ENCODE measurements at regions of chr15 and their contacts with region 1.

Region 1: DNA sequence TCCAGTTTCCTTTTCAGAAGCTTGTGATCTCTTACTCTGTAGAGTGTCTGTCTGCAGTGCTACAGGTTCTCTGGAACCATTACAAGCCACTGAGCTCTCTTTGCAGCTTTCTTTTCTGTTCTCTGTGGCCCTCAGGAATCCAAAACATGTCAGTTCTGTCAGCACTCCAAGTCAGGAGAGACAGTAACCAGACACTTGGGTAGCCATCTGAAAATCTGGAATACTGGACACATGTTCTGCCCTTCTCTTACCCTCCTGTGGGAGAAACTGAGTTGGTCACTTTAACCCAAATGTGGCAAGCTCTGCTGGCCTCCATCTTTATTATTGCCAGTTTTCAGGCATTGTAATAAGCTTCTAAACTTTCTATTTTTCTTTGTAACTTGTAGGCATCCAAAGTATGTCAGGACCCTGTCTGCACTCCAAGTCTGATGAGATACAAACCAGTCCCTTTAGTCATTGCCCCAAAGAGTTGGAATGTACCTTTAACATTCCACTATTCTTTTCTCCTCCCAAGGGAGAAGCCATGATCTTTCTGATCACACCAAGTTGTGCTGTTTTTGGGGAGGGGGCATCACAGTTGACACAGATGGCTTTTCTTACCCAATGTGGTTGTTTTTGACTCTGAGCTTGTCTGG is 183.7 kb downstream of the DPH6 start:
- DNase-seq: no peak
- ATAC-seq: no peak
- H3K4me3 Mint-ChIP-seq: no peak overlapping the region
- H3K27ac Mint-ChIP-seq: no peak overlapping the region
- H3K4me1 Mint-ChIP-seq: no peaks in the 10 kb centered on the region
- H3K27me3 Mint-ChIP-seq: no peaks in the 10 kb centered on the region

Region 2: GRCh38 chr15:35374661-35375060 is 12.3 kb after region 1 on chr15:
- CTCF ChIA-PET with region 1: no interaction called
- POLR2A ChIA-PET with region 1: no interaction called
- intact Hi-C with region 1: loop called in 1 of 2 experiments (anchors 1 kb)
- DNase-seq: no peak
- ATAC-seq: no peak
- H3K4me3 Mint-ChIP-seq: no peak overlapping the region
- H3K27ac Mint-ChIP-seq: no peak overlapping the region
- H3K4me1 Mint-ChIP-seq: no peaks in the 10 kb centered on the region
- H3K27me3 Mint-ChIP-seq: no peaks in the 10 kb centered on the region

Region 3: DNA sequence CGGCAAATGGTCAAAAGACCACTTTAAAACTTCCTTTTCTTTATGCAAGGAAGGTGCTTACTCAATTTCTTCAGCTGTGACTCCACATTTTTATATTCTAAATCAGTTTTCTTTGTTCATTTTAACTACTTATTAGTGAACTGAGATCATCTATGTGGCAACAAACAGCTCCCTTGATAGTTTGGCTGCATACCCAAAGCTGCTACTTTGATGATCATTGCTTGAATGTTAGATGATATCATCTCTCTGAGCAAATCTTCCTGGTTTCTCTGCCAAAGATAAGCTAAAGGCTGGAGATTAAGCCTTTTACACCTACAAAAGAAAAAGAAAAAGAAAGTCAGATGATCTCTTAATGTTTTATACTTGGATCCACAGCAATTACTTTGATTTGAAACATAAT is 88.2 kb after region 1 on chr15:
- CTCF ChIA-PET with region 1: no interaction called
- POLR2A ChIA-PET with region 1: no interaction called
- intact Hi-C with region 1: no loop called
- DNase-seq: no peak
- ATAC-seq: no peak
- H3K4me3 Mint-ChIP-seq: no peak overlapping the region
- H3K27ac Mint-ChIP-seq: no peak overlapping the region
- H3K4me1 Mint-ChIP-seq: no peaks in the 10 kb centered on the region
- H3K27me3 Mint-ChIP-seq: no peaks in the 10 kb centered on the region

Region 4: DNA sequence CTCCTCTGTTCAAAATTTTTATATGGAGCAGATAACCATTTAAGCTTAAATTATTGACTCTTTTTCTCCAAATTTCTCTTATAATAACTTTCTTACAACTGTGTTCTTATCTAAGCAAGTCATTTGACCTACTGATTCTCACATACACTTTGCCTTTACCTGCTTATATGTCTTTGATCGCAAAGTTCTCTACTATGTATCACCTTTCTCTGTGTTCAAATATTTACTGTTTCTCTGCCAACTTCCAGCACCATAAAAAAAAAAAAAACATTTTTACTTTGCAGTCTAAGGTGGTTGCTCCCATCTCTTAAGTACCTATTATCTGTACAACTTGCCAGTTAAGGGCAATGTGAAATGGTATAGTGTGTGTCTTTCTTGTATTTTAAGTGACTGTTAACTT is 284.5 kb after region 1 on chr15:
- CTCF ChIA-PET with region 1: no interaction called
- POLR2A ChIA-PET with region 1: no interaction called
- intact Hi-C with region 1: no loop called
- DNase-seq: no peak
- ATAC-seq: no peak
- H3K4me3 Mint-ChIP-seq: no peak overlapping the region
- H3K27ac Mint-ChIP-seq: no peak overlapping the region
- H3K4me1 Mint-ChIP-seq: no peaks in the 10 kb centered on the region
- H3K27me3 Mint-ChIP-seq: peaks cover 10% of the 10 kb centered on the region